Left colon (tissue), 2 donors: ENCODE measurements at regions of chr1 and their contacts with region 1.

Region 1: GRCh38 chr1:169466259-169467230 is 19.2 kb downstream of the SLC19A2 start:
- DNase-seq: no peak
- ATAC-seq: peak; percentile 50

Region 2: GRCh38 chr1:169348383-169349036 is 118.0 kb before region 1 on chr1:
- intact Hi-C with region 1: no loop called
- DNase-seq: no peak
- ATAC-seq: peak; percentile 36

Region 3: DNA sequence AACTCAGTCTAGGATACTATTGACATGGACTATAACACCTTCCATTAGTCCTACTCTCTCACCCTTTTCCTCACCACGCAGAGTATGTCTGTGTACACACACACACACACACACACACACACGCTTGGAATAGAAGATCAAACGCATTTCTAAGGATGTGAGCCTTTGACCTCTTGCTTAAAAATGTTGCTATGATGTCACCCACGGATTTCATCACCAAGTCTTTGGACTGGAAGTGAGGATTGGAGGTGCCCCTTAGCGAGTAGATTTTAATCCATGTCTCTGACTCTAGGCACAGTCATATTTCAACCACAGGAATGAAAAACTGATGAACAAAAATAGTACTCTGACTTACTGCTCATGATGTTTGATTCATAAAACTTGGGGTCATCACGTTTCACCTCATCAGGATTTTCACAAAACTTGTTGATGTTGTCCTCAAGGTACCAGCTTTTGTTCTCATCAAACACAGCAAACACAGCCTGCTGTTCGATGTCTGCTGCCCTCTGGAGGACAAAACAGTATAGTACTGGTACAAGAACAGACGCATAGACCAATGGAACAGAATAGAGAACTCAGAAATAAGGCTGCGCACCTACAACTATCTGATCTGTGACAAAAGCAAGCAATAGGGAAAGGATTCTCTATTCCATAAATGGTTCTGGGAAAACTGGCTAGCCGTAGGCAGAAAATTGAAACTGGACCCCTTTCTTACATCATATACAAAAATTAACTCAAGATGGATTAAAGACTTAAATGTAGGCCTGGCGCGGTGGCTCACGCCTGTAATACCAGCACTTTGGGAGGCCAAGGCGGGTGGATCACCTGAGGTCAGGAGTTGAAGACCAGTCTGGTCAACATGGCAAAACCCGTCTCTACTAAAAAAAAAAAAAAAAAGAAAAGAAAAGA is 79.8 kb after region 1 on chr1:
- intact Hi-C with region 1: loop called (anchors 5 to 10 kb)
- DNase-seq: peak; percentile 35 to 36
- ATAC-seq: peak; percentile 74

Region 4: DNA sequence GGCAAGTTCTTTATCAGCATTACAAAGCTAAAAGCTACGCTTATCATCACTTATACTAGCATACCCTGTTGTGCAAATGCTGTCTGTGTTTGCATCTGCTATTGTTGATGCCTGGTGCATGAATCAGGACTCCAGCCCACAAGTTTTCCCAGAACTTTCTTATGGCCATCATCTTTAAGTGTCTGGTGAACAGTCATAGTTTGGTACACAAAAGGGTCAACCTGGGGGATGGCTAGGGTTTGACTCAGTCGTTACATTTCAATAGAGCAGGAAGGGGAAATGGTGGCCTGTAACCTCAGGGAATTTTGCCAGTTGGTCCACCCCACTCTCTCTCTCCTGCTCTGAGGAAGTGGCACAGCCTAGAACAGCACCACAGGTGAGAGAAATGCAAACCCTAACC is 209.5 kb after region 1 on chr1:
- intact Hi-C with region 1: no loop called
- DNase-seq: no peak
- ATAC-seq: no peak